SK-N-SH (cell line): ENCODE measurements at regions of chr17 and their contacts with region 1.

Region 1: GRCh38 chr17:57772774-57773173 is 27.7 kb upstream of the CCDC182 start:
- DNase-seq: no peak
- H3K4me3 ChIP-seq: no peak overlapping the region
- H3K27ac ChIP-seq: no peak overlapping the region
- H3K4me1 ChIP-seq: peaks cover 0 to 6% of the 10 kb centered on the region in 2 experiments; a peak in 1 of 4 replicates
- H3K27me3 ChIP-seq: peaks cover 44% of the 10 kb centered on the region
- CTCF ChIP-seq: no peak
- EP300 ChIP-seq: no peak
- RAD21 ChIP-seq: peak; percentile 58

Region 2: GRCh38 chr17:57761887-57762286 is 10.9 kb before region 1 on chr17:
- CTCF ChIA-PET with region 1: interaction called, 31 read pairs
- POLR2A ChIA-PET with region 1: no interaction called
- DNase-seq: no peak
- H3K4me3 ChIP-seq: no peak overlapping the region
- H3K27ac ChIP-seq: 0 out of 4 replicates have a peak overlapping the region, but pooled peaks of 1 of the 2 experiments have one; percentile 67
- H3K4me1 ChIP-seq: peaks cover 0 to 39% of the 10 kb centered on the region in 2 experiments; a peak in 2 of 4 replicates
- H3K27me3 ChIP-seq: peaks cover 18% of the 10 kb centered on the region; the same call in 1 of the 2 replicates
- CTCF ChIP-seq: no peak
- EP300 ChIP-seq: no peak
- RAD21 ChIP-seq: no peak

Region 3: GRCh38 chr17:58337600-58338453 is 565.1 kb after region 1 on chr17:
- CTCF ChIA-PET with region 1: no interaction called
- POLR2A ChIA-PET with region 1: no interaction called
- DNase-seq: no peak
- H3K4me3 ChIP-seq: no peak overlapping the region
- H3K27ac ChIP-seq: no peak overlapping the region
- H3K4me1 ChIP-seq: peaks cover 0 to 34% of the 10 kb centered on the region in 2 experiments; a peak in 1 of 4 replicates
- H3K27me3 ChIP-seq: no peaks in the 10 kb centered on the region
- CTCF ChIP-seq: no peak
- EP300 ChIP-seq: no peak
- RAD21 ChIP-seq: no peak